CD4-positive, alpha-beta T cell (primary cell): ENCODE measurements at regions of chr17 and their contacts with region 1.

Region 1: DNA sequence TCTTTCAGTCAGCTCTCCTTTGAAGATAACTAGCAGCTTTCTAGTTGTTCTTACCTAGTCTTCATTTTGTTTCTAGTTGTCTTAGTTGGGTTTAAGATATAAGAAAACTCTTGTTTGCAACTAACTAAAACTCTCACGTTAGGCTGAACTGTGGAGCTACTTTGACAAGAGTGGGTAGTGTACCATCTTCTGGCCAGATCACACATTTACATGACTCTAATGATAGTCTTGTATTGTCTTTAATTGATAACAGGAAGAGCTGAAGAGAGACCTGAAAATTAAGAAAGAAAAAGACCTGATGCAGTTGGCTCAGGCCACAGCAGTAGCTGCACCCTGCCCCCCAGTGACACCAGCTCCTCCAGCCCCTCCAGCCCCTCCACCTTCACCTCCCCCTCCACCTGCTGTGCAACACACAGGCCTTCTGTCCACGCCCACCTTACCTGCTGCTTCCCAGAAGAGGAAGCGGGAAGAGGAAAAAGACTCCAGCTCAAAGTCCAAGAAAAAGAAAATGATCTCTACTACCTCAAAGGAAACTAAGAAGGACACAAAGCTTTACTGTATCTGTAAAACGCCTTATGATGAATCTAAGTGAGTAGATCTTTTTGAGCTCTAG is 36.9 kb downstream of the C17orf58 start:
- DNase-seq: no peak
- ATAC-seq: no peak
- H3K4me3 ChIP-seq: no peak overlapping the region
- H3K4me3 Mint-ChIP-seq: no peak overlapping the region
- H3K27ac ChIP-seq: no peak overlapping the region
- H3K27ac Mint-ChIP-seq: peak overlapping the region; percentile 32
- H3K4me1 ChIP-seq: no peaks in the 10 kb centered on the region
- H3K4me1 Mint-ChIP-seq: peaks cover 5% of the 10 kb centered on the region
- H3K27me3 ChIP-seq: no peaks in the 10 kb centered on the region
- H3K27me3 Mint-ChIP-seq: no peaks in the 10 kb centered on the region
- CTCF ChIP-seq: no peak

Region 2: GRCh38 chr17:68011199-68011665 is 51.8 kb after region 1 on chr17:
- CTCF ChIA-PET with region 1: no interaction called
- POLR2A ChIA-PET with region 1: no interaction called
- intact Hi-C with region 1: loop called in 1 of 2 experiments (anchors 5 kb)
- DNase-seq: peak; percentile 31 to 80 (median 46)
- ATAC-seq: peak; percentile 78
- H3K4me3 ChIP-seq: peak overlapping the region; percentile 30
- H3K4me3 Mint-ChIP-seq: peak overlapping the region; percentile 14
- H3K27ac ChIP-seq: no peak overlapping the region
- H3K27ac Mint-ChIP-seq: no peak overlapping the region
- H3K4me1 ChIP-seq: peaks cover 8% of the 10 kb centered on the region
- H3K4me1 Mint-ChIP-seq: peaks cover 11% of the 10 kb centered on the region
- H3K27me3 ChIP-seq: no peaks in the 10 kb centered on the region
- H3K27me3 Mint-ChIP-seq: no peaks in the 10 kb centered on the region
- CTCF ChIP-seq: peak; percentile 85

Region 3: DNA sequence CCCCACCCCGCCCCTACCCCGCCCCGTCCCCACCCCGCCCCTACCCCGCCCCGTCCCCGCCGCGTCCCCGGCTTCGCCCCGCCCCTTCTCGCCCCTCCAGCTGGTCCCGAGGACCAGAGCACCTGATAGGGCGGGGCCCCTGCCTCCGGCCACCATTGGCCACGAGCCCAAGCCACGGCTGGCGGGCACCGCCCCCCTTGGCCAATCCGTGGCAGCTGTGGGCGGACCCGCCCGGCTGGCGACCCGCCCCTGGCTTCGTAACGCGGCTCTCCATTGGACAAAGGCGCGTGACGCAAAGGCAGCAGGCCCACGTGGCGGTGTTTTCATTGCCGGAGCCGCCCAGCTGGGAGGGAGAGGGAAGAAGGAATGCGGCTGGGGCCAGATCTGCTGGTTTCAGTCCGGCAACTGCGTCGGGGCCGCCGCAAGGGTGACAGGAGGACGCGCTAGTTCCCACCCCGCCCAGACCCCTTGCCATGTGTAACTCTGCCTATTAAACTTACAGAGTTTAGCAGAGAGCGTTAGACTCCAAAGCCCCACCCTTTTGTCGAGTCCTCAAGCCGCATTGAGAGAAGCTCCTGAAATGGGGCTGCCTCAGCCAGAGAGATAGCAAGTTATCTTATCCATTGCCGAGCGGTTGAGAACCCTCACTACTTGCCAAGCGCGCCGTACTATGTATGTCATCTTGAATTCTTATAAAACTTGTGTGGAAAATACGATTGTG is 498.3 kb after region 1 on chr17:
- CTCF ChIA-PET with region 1: no interaction called
- POLR2A ChIA-PET with region 1: no interaction called
- intact Hi-C with region 1: loop called (anchors 2 kb)
- DNase-seq: peak; percentile 95 to 99 (median 98)
- ATAC-seq: peak; percentile 93
- H3K4me3 ChIP-seq: peak overlapping the region; percentile 77
- H3K4me3 Mint-ChIP-seq: peak overlapping the region; percentile 82
- H3K27ac ChIP-seq: peak overlapping the region; percentile 43 to 59
- H3K27ac Mint-ChIP-seq: peak overlapping the region; percentile 81
- H3K4me1 ChIP-seq: peaks cover 50% of the 10 kb centered on the region
- H3K4me1 Mint-ChIP-seq: peaks cover 51% of the 10 kb centered on the region
- H3K27me3 ChIP-seq: no peaks in the 10 kb centered on the region
- H3K27me3 Mint-ChIP-seq: no peaks in the 10 kb centered on the region
- CTCF ChIP-seq: no peak